GM18951 (cell line): ENCODE measurements at regions of chr1 and their contacts with region 1.

Region 1: GRCh38 chr1:27605796-27606707 is 2.1 kb upstream of the AHDC1 start:
- POLR2A ChIP-seq: no peak

Region 2: DNA sequence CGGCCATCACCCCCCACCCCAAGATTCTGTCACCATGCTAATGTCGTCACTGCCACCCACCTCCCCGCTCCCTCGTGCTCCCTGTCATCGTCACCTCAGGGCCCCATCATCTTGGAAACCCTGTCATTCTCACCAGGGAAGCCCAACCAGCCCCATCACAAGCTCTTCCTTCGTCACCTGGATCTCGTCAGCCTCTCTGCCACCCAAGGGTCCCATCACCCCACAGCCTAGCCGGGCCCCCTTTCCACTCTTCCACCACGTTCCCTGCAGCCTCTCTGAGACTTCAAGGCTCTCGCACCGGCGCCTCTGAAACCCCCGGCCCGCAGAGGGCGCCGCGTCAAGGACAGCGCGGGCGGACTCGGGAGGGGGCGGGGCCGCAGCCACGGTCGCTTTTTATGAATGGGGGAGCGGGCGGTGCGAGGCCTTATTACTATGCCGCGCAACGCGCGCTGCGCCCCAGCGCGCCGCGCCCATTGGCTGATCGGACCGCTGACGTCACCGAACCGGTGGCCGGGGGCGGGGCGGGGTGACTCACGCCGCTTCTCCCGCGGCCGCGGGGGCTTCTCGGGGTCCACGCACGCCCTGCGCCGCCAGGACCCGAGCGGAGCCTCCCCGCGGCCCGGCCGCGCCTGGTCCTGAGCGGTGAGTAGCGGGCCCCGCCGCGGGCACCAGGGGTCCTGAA is 213.8 kb before region 1 on chr1 and contains the start of gene GPR3:
- in situ Hi-C with region 1: loop called (anchors 5 kb)
- POLR2A ChIP-seq: peak; percentile 25

Region 3: DNA sequence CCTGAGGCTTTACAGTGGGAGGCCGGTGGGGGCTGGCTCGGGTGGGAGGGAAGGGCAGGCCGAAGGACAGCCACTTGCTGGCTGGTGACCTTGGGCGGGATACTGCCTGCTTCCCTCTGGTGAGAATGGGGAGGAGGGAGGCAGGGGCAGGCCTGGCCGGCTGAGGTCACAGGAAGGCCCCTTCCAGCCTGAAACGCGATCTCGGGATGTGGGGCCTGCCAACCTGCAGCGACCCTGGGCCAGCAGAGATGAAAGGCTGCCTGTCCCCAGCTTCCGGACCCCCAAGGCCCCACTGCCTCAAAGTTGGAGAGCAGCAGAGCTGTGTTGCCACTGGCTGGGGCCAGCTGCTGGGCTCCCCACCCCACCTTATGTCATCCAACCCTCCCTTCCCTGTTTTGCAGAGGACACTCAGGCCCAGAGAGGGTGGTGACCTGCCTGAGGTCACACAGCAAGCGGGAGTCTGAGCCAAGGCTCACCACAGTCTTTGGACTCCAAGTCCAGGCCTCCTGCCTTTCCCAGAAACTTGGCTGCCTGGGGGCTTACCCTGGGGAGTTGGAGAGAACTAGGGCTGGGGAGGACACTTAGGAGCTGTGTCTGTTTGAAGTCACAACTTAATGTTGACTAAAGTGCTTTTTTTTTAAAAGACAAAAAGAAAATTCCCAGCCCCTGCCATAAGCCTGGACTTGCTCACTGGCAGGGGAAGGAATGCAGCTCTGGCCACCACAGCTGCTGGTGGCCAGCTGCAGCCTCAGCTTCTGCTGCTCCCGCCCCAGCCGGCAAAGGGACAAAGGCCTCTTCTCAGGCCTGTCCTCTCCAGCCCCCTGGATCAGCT is 101.2 kb before region 1 on chr1:
- in situ Hi-C with region 1: no loop called
- POLR2A ChIP-seq: no peak

Region 4: DNA sequence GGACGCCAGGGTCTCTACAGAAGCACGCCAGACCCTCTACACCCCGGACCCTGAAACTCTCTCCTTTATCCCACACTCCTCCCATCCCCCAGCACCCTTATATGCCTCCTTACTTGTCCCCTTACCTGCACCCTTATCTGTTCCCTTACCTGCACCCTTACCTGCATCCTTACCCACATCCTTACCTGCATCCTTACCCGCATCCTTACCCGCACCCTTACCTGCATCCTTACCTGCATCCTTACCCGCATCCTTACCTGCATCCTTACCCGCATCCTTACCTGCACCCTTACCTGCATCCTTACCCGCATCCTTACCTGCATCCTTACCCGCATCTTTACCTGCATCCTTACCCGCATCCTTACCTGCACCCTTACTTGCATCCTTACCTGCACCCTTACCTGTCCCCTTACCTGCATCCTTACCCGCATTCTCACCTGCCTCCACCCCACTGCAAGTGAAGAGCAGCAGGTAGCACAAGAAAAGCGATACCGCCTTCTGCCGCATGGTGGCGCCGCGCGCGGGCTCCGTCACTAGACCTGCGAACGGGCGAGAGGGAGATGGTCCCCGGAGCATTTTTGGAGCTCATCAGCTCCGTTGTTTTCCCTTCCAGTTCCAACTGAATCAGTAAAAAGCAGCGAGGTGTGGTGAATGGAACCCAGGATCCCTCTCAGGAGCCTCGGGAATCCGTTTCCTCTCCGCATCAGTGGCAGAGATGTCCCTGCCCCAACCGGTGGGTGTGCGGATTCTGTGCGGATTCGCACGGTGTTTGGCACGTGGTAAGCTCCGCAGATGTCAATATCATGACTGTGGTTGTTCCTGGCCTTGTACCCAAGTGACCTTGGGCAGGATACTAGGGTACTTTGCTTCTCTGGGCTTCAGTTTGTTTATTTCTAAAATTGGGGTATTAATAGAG is 63.0 kb after region 1 on chr1:
- in situ Hi-C with region 1: loop called (anchors 5 kb)
- POLR2A ChIP-seq: no peak